AG04450 (cell line): ENCODE measurements at regions of chr20 and their contacts with region 1.

Region 1: DNA sequence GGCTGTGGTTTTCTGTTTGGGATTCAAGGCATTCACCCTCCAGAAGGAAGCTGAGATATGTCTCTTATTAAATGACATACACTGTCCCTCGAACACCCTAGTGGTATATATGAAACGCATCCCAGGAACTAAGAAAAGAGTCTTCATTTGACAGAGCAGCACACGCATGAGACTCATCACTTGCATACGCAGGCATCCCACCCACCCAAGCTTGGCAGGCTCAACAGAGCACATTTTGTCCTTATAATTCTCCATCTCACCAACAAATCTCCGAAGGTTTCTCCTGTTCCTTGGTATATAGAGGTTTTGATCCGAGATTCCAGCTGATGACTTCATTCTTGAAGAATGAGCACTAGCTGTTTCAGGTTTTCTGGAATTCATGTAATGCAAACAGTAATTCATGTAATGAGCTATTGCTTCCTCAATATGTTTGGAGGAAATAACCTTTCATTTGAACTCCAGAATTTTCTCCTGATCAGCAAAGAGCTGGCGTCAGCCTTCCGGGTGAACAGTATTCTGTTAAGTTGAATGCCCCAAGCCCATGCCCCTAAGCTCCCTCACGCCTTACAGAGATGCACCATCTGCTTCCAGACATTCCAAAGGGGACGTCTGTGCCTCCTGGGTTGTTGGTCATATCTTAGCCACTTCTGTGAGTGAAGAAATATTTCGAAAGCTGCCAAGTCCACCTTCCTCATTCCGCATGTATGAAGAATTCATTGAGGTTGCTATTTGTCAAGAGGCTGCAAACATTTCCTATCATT is 66.0 kb upstream of the CDH4 start:
- DNase-seq: peak; percentile 90
- H3K4me3 ChIP-seq: no peak overlapping the region
- H3K27ac ChIP-seq: peak overlapping the region; percentile 87
- H3K27me3 ChIP-seq: no peaks in the 10 kb centered on the region
- CTCF ChIP-seq: 0 out of 2 replicates have a peak, but pooled peaks have one; percentile 9

Region 2: DNA sequence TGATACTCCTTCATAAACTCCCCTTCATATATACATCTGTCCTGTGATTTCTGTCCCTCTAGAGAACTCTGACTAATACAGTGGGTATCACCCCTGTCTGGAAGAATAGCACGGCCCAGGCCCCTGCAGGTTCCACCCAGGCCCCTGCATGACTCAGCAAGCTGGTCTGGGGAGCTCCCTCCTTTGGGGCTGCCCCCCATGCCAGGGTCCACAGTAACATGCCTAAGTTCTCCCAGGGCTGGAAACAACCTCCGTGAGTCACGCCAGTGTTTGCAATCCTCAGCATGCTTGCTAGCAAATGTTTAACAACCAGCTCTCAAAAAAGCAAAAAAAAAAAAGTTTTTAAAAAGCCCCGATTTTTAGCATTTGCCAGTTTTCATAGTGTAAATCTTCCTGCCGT is 68.3 kb before region 1 on chr20:
- CTCF ChIA-PET with region 1: interaction called, 3 read pairs
- POLR2A ChIA-PET with region 1: interaction called, 16 read pairs
- DNase-seq: peak; percentile 46
- H3K4me3 ChIP-seq: no peak overlapping the region
- H3K27ac ChIP-seq: peak overlapping the region; percentile 82
- H3K27me3 ChIP-seq: no peaks in the 10 kb centered on the region
- CTCF ChIP-seq: no peak

Region 3: GRCh38 chr20:61219021-61219431 is 33.0 kb after region 1 on chr20:
- CTCF ChIA-PET with region 1: interaction called, 3 read pairs
- POLR2A ChIA-PET with region 1: interaction called, 10 read pairs
- DNase-seq: no peak
- H3K4me3 ChIP-seq: no peak overlapping the region
- H3K27ac ChIP-seq: no peak overlapping the region
- H3K27me3 ChIP-seq: peaks cover 17% of the 10 kb centered on the region
- CTCF ChIP-seq: no peak